Activated CD4-positive, alpha-beta T cell treated with anti-CD3 and anti-CD28 coated beads for 36 hours (primary cell): ENCODE measurements at regions of chr5 and their contacts with region 1.

Region 1: GRCh38 chr5:164027738-164028137 is 522.3 kb downstream of the MAT2B start:
- DNase-seq: no peak
- ATAC-seq: no peak
- H3K4me3 Mint-ChIP-seq: no peak overlapping the region
- H3K27ac Mint-ChIP-seq: no peak overlapping the region
- H3K4me1 Mint-ChIP-seq: no peaks in the 10 kb centered on the region
- H3K27me3 Mint-ChIP-seq: no peaks in the 10 kb centered on the region

Region 2: GRCh38 chr5:164179406-164179805 is 151.7 kb after region 1 on chr5:
- CTCF ChIA-PET with region 1: no interaction called
- POLR2A ChIA-PET with region 1: interaction called, 10 read pairs
- intact Hi-C with region 1: no loop called
- DNase-seq: no peak
- ATAC-seq: no peak
- H3K4me3 Mint-ChIP-seq: no peak overlapping the region
- H3K27ac Mint-ChIP-seq: no peak overlapping the region
- H3K4me1 Mint-ChIP-seq: no peaks in the 10 kb centered on the region
- H3K27me3 Mint-ChIP-seq: no peaks in the 10 kb centered on the region